ENCODE measurements at regions of chr15 and their contacts with region 1.

Region 1: DNA sequence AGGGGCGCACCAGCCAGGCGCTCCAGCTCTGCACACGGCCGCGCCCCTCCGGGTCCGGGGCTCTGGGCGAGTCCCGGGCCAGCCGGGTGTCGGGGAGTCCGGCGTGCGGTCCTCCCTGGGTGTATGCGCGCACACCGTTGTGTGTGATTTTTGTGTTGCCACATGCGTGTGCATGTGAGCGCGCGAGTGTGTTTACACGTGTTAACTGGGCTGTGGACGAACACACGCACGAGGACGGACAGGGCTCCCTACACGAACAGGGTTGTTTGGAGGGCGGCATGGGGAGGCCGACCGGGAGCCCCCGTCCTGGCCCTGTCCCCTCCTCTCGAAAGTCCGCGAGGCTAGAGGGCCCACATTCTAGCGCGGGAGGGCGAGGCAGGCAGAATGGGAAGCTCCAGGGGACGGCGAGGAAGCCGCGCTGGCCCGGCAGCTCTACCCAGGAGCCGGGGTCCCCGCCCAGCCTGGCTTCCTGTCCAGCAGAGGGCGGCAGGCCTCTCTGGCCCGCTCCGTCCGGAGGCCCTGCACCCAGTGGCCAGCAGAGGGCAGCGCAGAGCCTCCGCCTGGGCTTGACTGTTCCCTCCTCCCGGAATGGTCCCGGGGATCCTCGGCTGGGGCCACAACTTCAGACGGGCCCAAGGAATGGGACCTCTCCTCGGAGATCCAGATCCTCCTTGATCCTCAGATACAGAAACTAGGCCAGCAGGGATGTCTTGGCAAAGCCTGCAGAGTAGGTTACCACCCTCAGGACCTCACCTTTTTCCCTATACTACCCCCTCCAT is 611 bp upstream of the LINGO1 start:
- ATAC-seq: peak; percentile 71 to 91 (median 79)
- H3K4me3 ChIP-seq: peak overlapping the region; percentile 57 to 97 (median 86)
- H3K27ac ChIP-seq: peak overlapping the region; percentile 92 to 95
- H3K4me1 ChIP-seq: peaks cover 20 to 40% of the 10 kb centered on the region in 2 donors

Region 2: DNA sequence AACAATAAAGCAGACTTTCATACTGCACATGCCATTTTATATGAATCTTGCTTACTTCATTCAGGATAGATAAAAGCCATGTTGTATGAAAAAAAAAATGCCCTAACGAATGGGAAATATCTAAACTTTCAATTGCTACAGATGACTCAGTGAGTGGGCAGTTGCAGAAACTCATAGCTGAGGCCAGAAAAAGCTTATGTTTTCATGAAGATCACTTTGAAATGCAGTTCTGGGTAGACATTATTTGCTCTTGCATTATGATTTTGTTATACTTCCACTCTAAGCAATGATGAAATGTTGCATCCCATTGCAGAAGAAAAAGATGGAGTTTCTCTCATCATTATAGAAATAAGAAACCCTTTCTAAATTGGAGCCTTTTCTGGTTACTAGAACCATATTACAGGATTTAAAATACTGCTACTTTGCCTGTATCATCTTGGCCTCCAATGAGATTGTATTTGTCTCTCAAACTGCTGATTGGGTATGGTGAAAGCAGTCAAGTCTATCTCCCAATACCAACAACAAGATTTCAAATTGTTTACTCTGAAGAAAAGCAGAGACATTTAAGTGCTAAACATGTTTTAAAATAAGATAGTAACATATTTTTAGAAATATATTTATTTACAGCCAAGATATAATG is 230.5 kb before region 1 on chr15:
- in situ Hi-C with region 1: no loop called
- ATAC-seq: peak in 3 of 8 experiments; percentile 21 to 30 (median 28)
- H3K4me3 ChIP-seq: no peak overlapping the region
- H3K27ac ChIP-seq: no peak overlapping the region
- H3K4me1 ChIP-seq: no peaks in the 10 kb centered on the region

Region 3: DNA sequence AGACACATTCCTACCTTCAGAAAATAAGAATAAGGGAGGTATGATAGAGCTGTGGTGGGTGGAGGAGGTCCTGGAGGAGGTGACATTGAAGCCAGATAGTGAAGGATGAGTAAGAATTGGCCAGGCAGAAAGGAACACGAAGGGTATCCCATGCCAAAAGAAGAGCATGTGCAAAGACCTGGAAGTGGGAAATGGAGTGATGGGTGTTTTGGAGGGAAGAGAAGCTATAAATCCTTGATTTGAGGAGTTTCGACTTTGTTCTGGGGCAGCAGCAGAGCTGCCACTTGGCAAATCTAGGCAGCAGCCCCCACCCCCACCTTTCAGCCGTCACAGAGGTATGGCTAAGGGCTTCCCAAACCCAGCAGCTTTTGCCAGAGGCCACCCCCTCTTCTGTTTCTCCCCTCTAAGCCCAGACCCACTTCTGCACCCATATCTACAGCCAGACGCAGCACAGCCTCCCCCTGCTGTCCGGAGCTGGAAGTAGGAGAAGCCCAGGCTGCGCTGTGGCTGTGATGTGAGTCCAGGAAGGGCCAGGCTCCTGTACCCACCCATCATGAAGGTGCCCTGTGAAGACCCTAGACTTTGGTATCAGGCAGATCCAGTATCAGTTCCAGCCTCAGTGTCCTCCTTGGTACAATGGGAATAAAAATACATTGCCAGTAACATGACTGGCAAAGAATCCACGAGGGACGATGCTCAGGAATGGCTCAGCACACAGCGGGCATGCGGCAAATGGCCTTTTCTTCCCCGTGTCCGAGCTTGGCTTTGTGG is 188.1 kb after region 1 on chr15:
- in situ Hi-C with region 1: loop called in 8 of 9 experiments (anchors 25 kb)
- ATAC-seq: peak; percentile 53 to 80 (median 60)
- H3K4me3 ChIP-seq: no peak overlapping the region
- H3K27ac ChIP-seq: peak overlapping the region in 1 of 2 donors; percentile 32
- H3K4me1 ChIP-seq: peaks cover 40 to 43% of the 10 kb centered on the region in 2 donors

Region 4: GRCh38 chr15:77983708-77984445 is 350.6 kb after region 1 on chr15:
- in situ Hi-C with region 1: no loop called
- ATAC-seq: peak in 3 of 8 experiments; percentile 52 to 59 (median 54)
- H3K4me3 ChIP-seq: no peak overlapping the region
- H3K27ac ChIP-seq: no peak overlapping the region
- H3K4me1 ChIP-seq: peaks cover 6 to 9% of the 10 kb centered on the region in 2 donors